Activated CD8-positive, alpha-beta T cell treated with anti-CD3 and anti-CD28 coated beads for 36 hours (primary cell): ENCODE measurements at regions of chr11 and their contacts with region 1.

Region 1: DNA sequence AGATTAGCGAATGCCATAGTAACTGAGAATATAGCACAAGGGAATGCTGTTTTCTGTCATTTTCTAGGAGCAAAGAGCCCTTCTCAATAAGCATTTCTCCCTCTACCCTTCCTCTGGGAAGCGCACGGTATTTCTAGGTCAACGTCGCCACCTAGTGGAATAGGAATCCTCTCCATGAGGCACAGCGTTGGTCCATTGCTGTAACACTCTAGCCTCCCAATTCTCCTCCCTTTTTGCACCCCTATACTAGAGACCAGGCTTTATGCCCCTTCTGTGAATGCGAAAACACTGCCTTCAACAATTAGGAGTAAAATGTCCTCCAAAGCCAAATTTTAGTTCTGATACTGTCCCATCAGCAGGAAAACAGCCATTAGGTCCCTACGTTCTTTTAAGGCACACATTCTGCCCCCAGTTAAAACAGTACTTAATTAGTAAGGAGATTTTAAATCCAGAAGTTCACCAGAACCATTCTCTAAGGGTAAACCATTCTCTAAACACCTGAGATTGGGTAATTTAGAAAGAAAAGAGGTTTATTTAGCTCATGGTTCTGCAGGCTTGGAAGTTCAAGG is 12.8 kb upstream of the HYLS1 start:
- DNase-seq: peak; percentile 63
- ATAC-seq: peak; percentile 64
- H3K4me3 Mint-ChIP-seq: no peak overlapping the region
- H3K27ac Mint-ChIP-seq: no peak overlapping the region
- H3K4me1 Mint-ChIP-seq: no peaks in the 10 kb centered on the region
- H3K27me3 Mint-ChIP-seq: peaks cover 2% of the 10 kb centered on the region
- CTCF ChIP-seq: peak; percentile 84

Region 2: GRCh38 chr11:125625630-125626287 is 248.9 kb before region 1 on chr11:
- CTCF ChIA-PET with region 1: no interaction called
- POLR2A ChIA-PET with region 1: no interaction called
- intact Hi-C with region 1: loop called (anchors 10 kb)
- DNase-seq: peak; percentile 90
- ATAC-seq: peak; percentile 88
- H3K4me3 Mint-ChIP-seq: peak overlapping the region; percentile 93
- H3K27ac Mint-ChIP-seq: peak overlapping the region; percentile 97
- H3K4me1 Mint-ChIP-seq: peaks cover 22% of the 10 kb centered on the region
- H3K27me3 Mint-ChIP-seq: no peaks in the 10 kb centered on the region
- CTCF ChIP-seq: no peak

Region 3: GRCh38 chr11:125690006-125690405 is 184.6 kb before region 1 on chr11:
- CTCF ChIA-PET with region 1: no interaction called
- POLR2A ChIA-PET with region 1: no interaction called
- intact Hi-C with region 1: loop called (anchors 10 kb)
- DNase-seq: no peak
- ATAC-seq: no peak
- H3K4me3 Mint-ChIP-seq: no peak overlapping the region
- H3K27ac Mint-ChIP-seq: no peak overlapping the region
- H3K4me1 Mint-ChIP-seq: no peaks in the 10 kb centered on the region
- H3K27me3 Mint-ChIP-seq: no peaks in the 10 kb centered on the region
- CTCF ChIP-seq: no peak

Region 4: GRCh38 chr11:125724125-125724524 is 150.5 kb before region 1 on chr11:
- CTCF ChIA-PET with region 1: no interaction called
- POLR2A ChIA-PET with region 1: no interaction called
- intact Hi-C with region 1: loop called (anchors 10 kb)
- DNase-seq: no peak
- ATAC-seq: no peak
- H3K4me3 Mint-ChIP-seq: no peak overlapping the region
- H3K27ac Mint-ChIP-seq: no peak overlapping the region
- H3K4me1 Mint-ChIP-seq: no peaks in the 10 kb centered on the region
- H3K27me3 Mint-ChIP-seq: peaks cover 15% of the 10 kb centered on the region
- CTCF ChIP-seq: no peak